SK-N-SH (cell line): ENCODE measurements at regions of chr14 and their contacts with region 1.

Region 1: GRCh38 chr14:23068476-23069412 is 11.4 kb upstream of the CDH24 start:
- DNase-seq: peak; percentile 89
- H3K4me3 ChIP-seq: peak overlapping the region in 1 of 2 experiments; percentile 50; a peak in 1 of 4 replicates
- H3K27ac ChIP-seq: peak overlapping the region; percentile 35 to 40; a peak in 3 of 4 replicates
- H3K4me1 ChIP-seq: peaks cover 20 to 35% of the 10 kb centered on the region in 2 experiments
- H3K27me3 ChIP-seq: no peaks in the 10 kb centered on the region
- CTCF ChIP-seq: peak; percentile 99
- EP300 ChIP-seq: no peak
- RAD21 ChIP-seq: peak; percentile 77

Region 2: DNA sequence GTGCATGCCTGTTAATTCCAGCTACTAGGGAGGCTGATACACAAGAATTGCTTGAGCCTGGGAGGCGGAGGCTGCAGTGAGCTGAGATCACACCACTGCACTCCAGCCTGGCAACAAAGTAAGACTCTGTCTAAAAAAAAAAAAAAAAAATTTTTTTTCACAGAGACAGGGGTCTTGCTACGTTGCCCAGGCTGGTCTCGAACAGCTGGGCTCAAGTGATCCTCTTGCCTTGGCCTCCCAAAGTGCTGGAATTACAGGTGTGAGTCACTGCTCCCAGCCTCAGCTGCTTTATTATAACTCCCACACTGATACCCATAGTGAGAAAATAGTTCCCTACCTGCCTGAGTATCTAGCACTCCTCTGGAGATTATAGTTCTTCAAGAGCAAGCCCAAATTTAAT is 123.1 kb before region 1 on chr14:
- CTCF ChIA-PET with region 1: interaction called, 11 read pairs
- POLR2A ChIA-PET with region 1: no interaction called
- DNase-seq: no peak
- H3K4me3 ChIP-seq: no peak overlapping the region
- H3K27ac ChIP-seq: no peak overlapping the region
- H3K4me1 ChIP-seq: no peaks in the 10 kb centered on the region
- H3K27me3 ChIP-seq: no peaks in the 10 kb centered on the region
- CTCF ChIP-seq: no peak
- EP300 ChIP-seq: no peak
- RAD21 ChIP-seq: no peak

Region 3: GRCh38 chr14:22994762-22995275 is 73.9 kb before region 1 on chr14:
- CTCF ChIA-PET with region 1: interaction called, 1,566 read pairs
- POLR2A ChIA-PET with region 1: no interaction called
- DNase-seq: peak; percentile 77
- H3K4me3 ChIP-seq: no peak overlapping the region; a peak in 1 of 4 replicates
- H3K27ac ChIP-seq: no peak overlapping the region
- H3K4me1 ChIP-seq: peaks cover 4 to 25% of the 10 kb centered on the region in 2 experiments; a peak in 3 of 4 replicates
- H3K27me3 ChIP-seq: no peaks in the 10 kb centered on the region
- CTCF ChIP-seq: peak; percentile 70
- EP300 ChIP-seq: no peak
- RAD21 ChIP-seq: peak; percentile 83

Region 4: DNA sequence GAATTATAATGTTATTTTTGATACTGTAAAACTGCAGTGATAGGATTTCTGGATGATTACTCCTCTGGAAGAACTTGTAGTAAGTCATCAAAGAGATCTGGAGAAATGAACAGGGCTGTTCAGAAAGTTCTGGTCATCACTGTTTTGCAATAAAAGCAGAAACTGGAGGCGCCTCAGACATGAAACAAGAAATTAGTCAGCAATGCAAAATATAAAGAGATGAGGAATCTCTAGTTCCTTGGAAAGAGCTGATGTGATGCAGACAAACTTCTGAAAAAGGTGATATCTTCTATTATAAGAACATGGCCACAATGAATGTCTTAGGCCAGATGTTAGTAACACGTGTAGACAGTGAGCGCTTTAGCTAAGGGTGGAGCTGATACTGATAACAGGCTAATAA is 16.7 kb after region 1 on chr14:
- CTCF ChIA-PET with region 1: interaction called, 68 read pairs
- POLR2A ChIA-PET with region 1: no interaction called
- DNase-seq: no peak
- H3K4me3 ChIP-seq: no peak overlapping the region
- H3K27ac ChIP-seq: no peak overlapping the region
- H3K4me1 ChIP-seq: no peaks in the 10 kb centered on the region
- H3K27me3 ChIP-seq: no peaks in the 10 kb centered on the region
- CTCF ChIP-seq: no peak
- EP300 ChIP-seq: no peak
- RAD21 ChIP-seq: no peak

Region 5: GRCh38 chr14:23141671-23142451 is 73.1 kb after region 1 on chr14:
- CTCF ChIA-PET with region 1: no interaction called
- POLR2A ChIA-PET with region 1: no interaction called
- DNase-seq: peak; percentile 39
- H3K4me3 ChIP-seq: no peak overlapping the region
- H3K27ac ChIP-seq: no peak overlapping the region
- H3K4me1 ChIP-seq: no peaks in the 10 kb centered on the region; a peak in 1 of 4 replicates
- H3K27me3 ChIP-seq: no peaks in the 10 kb centered on the region; the same call in 1 of the 2 replicates
- CTCF ChIP-seq: no peak
- EP300 ChIP-seq: no peak
- RAD21 ChIP-seq: no peak

Region 6: DNA sequence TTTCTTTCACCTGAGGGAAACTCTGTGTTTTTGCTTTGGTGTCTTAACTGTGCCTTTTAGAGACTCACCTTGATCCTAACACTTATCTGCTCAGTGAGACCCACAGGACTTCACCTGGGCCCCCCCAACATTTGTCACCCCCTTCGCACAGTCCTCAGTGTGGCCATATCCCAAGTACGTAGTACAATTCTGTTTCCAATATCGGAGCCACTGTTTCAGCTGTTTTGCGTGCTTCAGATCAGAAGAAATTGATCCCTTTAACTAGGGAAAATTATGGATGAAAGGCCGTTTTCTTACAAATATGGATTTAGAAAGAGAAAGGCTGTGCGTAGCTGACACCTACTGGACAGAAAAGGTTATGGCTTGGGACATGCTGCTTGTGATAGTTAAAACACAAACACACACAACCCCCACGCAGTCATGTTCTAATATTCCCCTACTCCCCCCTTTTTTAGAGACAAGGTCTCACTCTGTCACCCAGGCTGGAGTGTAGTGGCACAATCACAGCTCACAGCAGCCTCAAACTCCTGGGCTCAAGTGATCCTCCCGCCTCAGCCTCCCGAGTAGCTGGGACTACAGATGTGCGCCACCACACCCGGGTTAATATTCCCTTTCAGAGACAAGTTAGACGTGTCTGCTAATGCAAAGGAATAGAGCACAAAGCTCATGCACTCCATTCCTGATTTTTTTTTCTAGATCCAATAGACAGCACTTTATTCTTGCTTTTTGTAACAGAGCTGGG is 118.3 kb after region 1 on chr14:
- CTCF ChIA-PET with region 1: interaction called, 23 read pairs
- POLR2A ChIA-PET with region 1: no interaction called
- DNase-seq: peak; percentile 63
- H3K4me3 ChIP-seq: no peak overlapping the region; a peak in 1 of 4 replicates
- H3K27ac ChIP-seq: no peak overlapping the region
- H3K4me1 ChIP-seq: peaks cover 0 to 2% of the 10 kb centered on the region in 2 experiments; a peak in 1 of 4 replicates
- H3K27me3 ChIP-seq: peaks cover 20% of the 10 kb centered on the region
- CTCF ChIP-seq: peak; percentile 85
- EP300 ChIP-seq: no peak
- RAD21 ChIP-seq: peak; percentile 91